ENCODE measurements at regions of chr9 and their contacts with region 1.

Region 1: GRCh38 chr9:8384091-8384490 is 584.5 kb upstream of the DMAC1 start:
- DNase-seq: no peak
- H3K4me3 ChIP-seq: no peak overlapping the region
- H3K4me3 Mint-ChIP-seq: peak overlapping the region; percentile 18
- H3K27ac Mint-ChIP-seq: peak overlapping the region; percentile 90
- H3K4me1 ChIP-seq: peaks cover 60% of the 10 kb centered on the region
- H3K4me1 Mint-ChIP-seq: peaks cover 22% of the 10 kb centered on the region
- H3K27me3 ChIP-seq: no peaks in the 10 kb centered on the region
- H3K27me3 Mint-ChIP-seq: no peaks in the 10 kb centered on the region
- CTCF ChIP-seq: no peak

Region 2: DNA sequence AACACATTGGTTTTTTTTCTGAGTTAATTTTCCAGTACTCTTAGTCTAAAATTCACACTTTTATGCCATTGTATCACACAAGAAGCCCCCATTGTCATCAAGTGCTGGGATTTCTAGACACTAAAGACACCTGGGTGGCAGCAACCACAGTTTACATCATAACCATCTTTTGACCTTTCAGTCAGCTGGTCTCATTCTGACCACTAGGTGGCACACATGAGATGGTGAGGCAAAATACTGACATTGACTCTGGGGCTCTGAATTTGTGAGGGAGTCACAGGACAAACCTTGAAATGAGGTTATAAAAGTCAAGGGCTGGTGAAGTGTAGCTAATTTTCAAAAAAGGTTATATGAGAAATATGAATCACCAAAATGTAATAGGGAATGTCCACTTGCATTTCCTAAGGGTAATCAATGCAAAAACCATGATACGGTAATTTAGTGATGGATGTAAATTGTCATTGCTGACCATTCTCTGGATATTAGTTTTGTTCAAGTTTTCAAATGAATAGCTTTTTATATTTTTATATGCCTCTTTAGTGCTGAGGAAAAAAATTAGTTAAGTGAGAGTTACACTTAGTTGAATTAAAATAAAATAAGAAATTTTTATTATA is 813.9 kb before region 1 on chr9:
- CTCF ChIA-PET with region 1: no interaction called
- POLR2A ChIA-PET with region 1: no interaction called
- intact Hi-C with region 1: loop called (anchors 1 kb)
- DNase-seq: peak; percentile 55 to 73
- H3K4me3 ChIP-seq: no peak overlapping the region
- H3K4me3 Mint-ChIP-seq: no peak overlapping the region
- H3K27ac Mint-ChIP-seq: no peak overlapping the region
- H3K4me1 ChIP-seq: no peaks in the 10 kb centered on the region
- H3K4me1 Mint-ChIP-seq: no peaks in the 10 kb centered on the region
- H3K27me3 ChIP-seq: no peaks in the 10 kb centered on the region
- H3K27me3 Mint-ChIP-seq: no peaks in the 10 kb centered on the region
- CTCF ChIP-seq: peak; percentile 69

Region 3: GRCh38 chr9:7994486-7994885 is 389.6 kb before region 1 on chr9:
- CTCF ChIA-PET with region 1: no interaction called
- POLR2A ChIA-PET with region 1: no interaction called
- intact Hi-C with region 1: loop called (anchors 5 kb)
- DNase-seq: no peak
- H3K4me3 ChIP-seq: no peak overlapping the region
- H3K4me3 Mint-ChIP-seq: peak overlapping the region; percentile 50
- H3K27ac Mint-ChIP-seq: peak overlapping the region; percentile 73
- H3K4me1 ChIP-seq: peaks cover 32% of the 10 kb centered on the region
- H3K4me1 Mint-ChIP-seq: peaks cover 14% of the 10 kb centered on the region
- H3K27me3 ChIP-seq: no peaks in the 10 kb centered on the region
- H3K27me3 Mint-ChIP-seq: no peaks in the 10 kb centered on the region
- CTCF ChIP-seq: no peak

Region 4: GRCh38 chr9:8115570-8115969 is 268.5 kb before region 1 on chr9:
- CTCF ChIA-PET with region 1: no interaction called
- POLR2A ChIA-PET with region 1: no interaction called
- intact Hi-C with region 1: no loop called
- DNase-seq: no peak
- H3K4me3 ChIP-seq: no peak overlapping the region
- H3K4me3 Mint-ChIP-seq: no peak overlapping the region
- H3K27ac Mint-ChIP-seq: no peak overlapping the region
- H3K4me1 ChIP-seq: peaks cover 21% of the 10 kb centered on the region
- H3K4me1 Mint-ChIP-seq: no peaks in the 10 kb centered on the region
- H3K27me3 ChIP-seq: no peaks in the 10 kb centered on the region
- H3K27me3 Mint-ChIP-seq: no peaks in the 10 kb centered on the region
- CTCF ChIP-seq: no peak

Region 5: DNA sequence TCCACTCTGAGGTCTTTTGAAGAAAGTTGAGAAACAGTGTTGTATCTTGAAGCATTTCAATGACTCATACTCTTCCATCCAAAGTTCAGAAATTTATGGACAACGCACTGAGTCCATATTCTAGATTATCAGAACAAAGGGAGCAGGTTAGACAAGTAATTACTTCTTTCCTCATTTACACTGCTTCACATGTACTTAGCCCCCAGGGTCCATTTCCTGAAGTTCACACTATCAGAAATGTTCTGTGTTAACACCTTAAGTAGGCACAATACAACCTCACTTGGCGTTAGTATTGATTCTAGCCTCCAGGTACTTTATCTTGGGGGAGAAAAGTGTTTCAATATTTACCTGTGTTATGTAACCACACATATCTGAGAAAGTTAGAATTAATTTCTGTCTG is 96.6 kb before region 1 on chr9:
- CTCF ChIA-PET with region 1: no interaction called
- POLR2A ChIA-PET with region 1: no interaction called
- intact Hi-C with region 1: loop called (anchors 1 kb)
- DNase-seq: peak; percentile 47 to 59
- H3K4me3 ChIP-seq: no peak overlapping the region
- H3K4me3 Mint-ChIP-seq: no peak overlapping the region
- H3K27ac Mint-ChIP-seq: peak overlapping the region; percentile 76
- H3K4me1 ChIP-seq: peaks cover 31% of the 10 kb centered on the region
- H3K4me1 Mint-ChIP-seq: peaks cover 14% of the 10 kb centered on the region
- H3K27me3 ChIP-seq: no peaks in the 10 kb centered on the region
- H3K27me3 Mint-ChIP-seq: no peaks in the 10 kb centered on the region
- CTCF ChIP-seq: no peak

Region 6: DNA sequence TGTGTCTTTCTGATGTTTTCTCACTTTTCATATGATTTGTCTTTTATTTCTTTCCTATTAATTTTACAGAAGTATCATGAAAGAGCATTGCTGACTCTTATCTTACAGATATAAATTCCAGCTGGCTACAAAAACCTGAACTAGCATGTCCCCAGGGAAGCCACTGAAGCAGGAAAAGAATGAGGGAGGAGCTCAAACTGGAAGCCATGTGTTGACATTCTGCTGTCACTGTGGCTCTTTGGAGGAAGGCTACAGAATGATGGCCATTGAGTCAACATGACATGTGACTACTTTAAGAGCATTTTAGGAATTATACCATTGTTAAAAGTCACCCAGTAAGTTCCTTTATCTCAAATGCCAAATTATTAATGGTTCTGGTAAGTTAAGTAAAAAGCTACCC is 53.8 kb after region 1 on chr9:
- CTCF ChIA-PET with region 1: no interaction called
- POLR2A ChIA-PET with region 1: no interaction called
- intact Hi-C with region 1: loop called (anchors 1 kb)
- DNase-seq: peak; percentile 37 to 39
- H3K4me3 ChIP-seq: no peak overlapping the region
- H3K4me3 Mint-ChIP-seq: no peak overlapping the region
- H3K27ac Mint-ChIP-seq: peak overlapping the region; percentile 84
- H3K4me1 ChIP-seq: peaks cover 17% of the 10 kb centered on the region
- H3K4me1 Mint-ChIP-seq: peaks cover 17% of the 10 kb centered on the region
- H3K27me3 ChIP-seq: no peaks in the 10 kb centered on the region
- H3K27me3 Mint-ChIP-seq: no peaks in the 10 kb centered on the region
- CTCF ChIP-seq: no peak

Region 7: GRCh38 chr9:8857926-8858595 is 474.0 kb after region 1 on chr9:
- CTCF ChIA-PET with region 1: no interaction called
- POLR2A ChIA-PET with region 1: no interaction called
- intact Hi-C with region 1: loop called (anchors 10 kb)
- DNase-seq: peak; percentile 40
- H3K4me3 ChIP-seq: peak overlapping the region; percentile 57
- H3K4me3 Mint-ChIP-seq: peak overlapping the region; percentile 87
- H3K27ac Mint-ChIP-seq: no peak overlapping the region
- H3K4me1 ChIP-seq: 0 out of 2 replicates have a peak, but pooled peaks cover 5% of the 10 kb centered on the region
- H3K4me1 Mint-ChIP-seq: no peaks in the 10 kb centered on the region
- H3K27me3 ChIP-seq: no peaks in the 10 kb centered on the region
- H3K27me3 Mint-ChIP-seq: no peaks in the 10 kb centered on the region
- CTCF ChIP-seq: no peak

Measured in Caco-2 (cell line).